CD4-positive, alpha-beta T cell (primary cell): ENCODE measurements at regions of chr21 and their contacts with region 1.

Region 1: DNA sequence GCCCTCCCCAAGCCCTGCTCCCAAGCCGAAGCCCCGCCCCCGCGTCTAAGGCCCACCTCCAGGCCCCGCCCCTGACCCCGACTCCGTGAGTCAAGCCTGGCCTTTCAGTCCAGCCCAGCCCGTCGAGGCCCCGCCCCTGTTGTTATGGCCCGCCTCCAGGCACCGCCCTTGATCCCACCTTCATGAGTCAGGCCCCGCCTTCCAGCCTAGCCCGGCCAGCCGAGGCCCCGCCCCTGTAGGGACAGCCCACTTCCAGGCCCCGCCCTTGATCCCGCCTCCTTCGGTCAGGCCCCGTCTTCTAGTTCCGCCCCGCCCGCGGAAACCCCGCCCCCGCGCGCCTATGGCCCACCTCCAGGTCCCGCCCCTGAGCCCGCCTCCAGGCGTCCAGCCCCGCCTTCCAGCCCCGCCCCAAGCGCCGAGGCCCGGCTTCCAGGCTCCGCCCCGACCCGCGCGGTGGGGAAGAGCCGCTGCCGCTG is 247 bp upstream of the DOP1B start:
- DNase-seq: peak; percentile 99 to 100 (median 100)
- ATAC-seq: peak; percentile 90
- H3K4me3 ChIP-seq: peak overlapping the region; percentile 85
- H3K4me3 Mint-ChIP-seq: peak overlapping the region; percentile 94
- H3K27ac ChIP-seq: peak overlapping the region; percentile 70 to 74
- H3K27ac Mint-ChIP-seq: peak overlapping the region; percentile 76
- H3K4me1 ChIP-seq: peaks cover 25% of the 10 kb centered on the region
- H3K4me1 Mint-ChIP-seq: peaks cover 44% of the 10 kb centered on the region
- H3K27me3 ChIP-seq: no peaks in the 10 kb centered on the region
- H3K27me3 Mint-ChIP-seq: no peaks in the 10 kb centered on the region
- CTCF ChIP-seq: no peak

Region 2: DNA sequence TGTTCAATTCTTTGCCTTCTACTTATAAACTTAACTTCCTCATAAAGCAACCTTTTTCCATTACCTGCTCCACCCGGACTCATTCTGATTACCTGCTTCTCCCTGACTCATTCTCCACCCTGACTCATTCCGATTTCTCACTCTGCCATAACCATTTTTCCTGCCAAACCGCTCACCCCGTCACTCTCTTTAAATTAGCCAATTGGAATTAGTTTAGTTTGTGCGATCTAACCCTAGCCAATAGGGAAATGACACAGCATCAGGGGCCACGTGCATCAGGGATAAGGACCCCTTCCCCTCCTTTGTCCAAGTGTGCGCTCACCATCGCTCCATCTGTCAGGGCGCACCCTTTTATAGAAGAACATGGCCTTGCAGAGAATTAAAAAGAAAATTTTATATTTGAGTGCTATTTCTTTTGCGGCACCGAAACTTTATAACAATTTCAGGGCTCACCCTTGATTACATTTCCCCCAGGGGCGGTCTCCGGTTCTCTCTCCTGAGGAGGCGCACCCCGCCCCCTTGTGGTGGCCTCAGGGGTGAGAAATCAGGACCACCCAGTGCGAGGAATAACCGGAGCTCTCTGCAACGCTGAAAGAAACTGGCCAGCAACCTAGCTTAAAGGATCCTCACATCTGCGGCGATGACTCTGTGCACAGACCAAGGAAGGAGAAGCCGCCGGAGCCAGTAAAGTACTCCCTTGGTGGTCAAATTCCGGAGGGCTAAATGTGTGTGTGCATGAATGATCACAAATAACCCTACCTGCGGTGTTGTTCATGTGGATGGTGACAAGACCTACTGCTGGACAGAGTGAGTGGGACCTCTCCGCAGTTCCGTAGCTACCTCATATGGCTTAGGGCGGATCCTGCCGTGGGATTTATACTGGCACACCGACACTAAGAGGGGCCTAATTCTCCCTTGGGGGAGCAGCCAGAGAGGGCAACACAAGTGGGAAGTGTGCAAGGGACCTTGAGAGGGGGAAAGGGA is 51.8 kb before region 1 on chr21:
- CTCF ChIA-PET with region 1: no interaction called
- POLR2A ChIA-PET with region 1: no interaction called
- intact Hi-C with region 1: no loop called
- DNase-seq: peak in 13 of 14 experiments; percentile 29 to 72 (median 51)
- ATAC-seq: peak; percentile 71
- H3K4me3 ChIP-seq: no peak overlapping the region
- H3K4me3 Mint-ChIP-seq: no peak overlapping the region
- H3K27ac ChIP-seq: no peak overlapping the region
- H3K27ac Mint-ChIP-seq: no peak overlapping the region
- H3K4me1 ChIP-seq: peaks cover 8% of the 10 kb centered on the region
- H3K4me1 Mint-ChIP-seq: peaks cover 11% of the 10 kb centered on the region
- H3K27me3 ChIP-seq: peaks cover 13 to 18% of the 10 kb centered on the region in 2 experiments
- H3K27me3 Mint-ChIP-seq: peaks cover 70% of the 10 kb centered on the region
- CTCF ChIP-seq: peak; percentile 61

Region 3: DNA sequence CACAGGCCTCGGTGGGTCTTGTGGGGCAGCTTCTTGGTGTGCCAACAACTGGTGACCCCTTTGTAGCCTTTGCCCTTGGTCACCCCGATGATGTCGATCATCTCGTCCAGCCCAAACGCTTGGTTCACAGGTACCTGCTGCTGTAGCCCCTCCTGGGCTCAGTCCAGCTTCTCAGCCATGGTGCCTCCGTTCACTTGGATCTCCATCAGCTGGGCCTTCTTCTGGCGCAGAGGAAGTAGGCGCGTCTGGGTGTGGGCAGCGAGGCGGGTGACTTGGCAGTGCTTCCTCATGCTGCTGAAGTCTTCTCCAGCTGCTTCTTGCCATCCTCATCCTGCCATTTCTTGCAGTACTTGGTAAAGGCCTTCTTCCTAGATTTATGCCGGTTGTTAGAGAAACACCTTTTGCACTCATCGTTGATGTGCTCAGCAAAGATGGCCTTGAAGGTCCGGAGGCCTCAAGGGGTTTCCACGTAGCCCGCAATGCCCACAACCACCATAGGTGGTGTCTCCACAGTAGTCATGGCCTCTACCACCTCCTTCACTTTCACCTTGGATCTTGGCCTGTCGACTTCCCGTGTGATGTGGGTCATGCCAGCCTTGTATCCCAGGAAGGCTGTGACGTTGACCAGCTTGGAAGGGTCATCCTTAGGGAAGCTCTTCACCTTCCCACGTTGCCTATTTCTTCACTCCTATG is 13.2 kb after region 1 on chr21:
- CTCF ChIA-PET with region 1: interaction called, 23 read pairs
- POLR2A ChIA-PET with region 1: interaction called, 11 read pairs
- intact Hi-C with region 1: loop called (anchors 1 to 2 kb)
- DNase-seq: no peak
- ATAC-seq: no peak
- H3K4me3 ChIP-seq: no peak overlapping the region
- H3K4me3 Mint-ChIP-seq: no peak overlapping the region
- H3K27ac ChIP-seq: no peak overlapping the region
- H3K27ac Mint-ChIP-seq: no peak overlapping the region
- H3K4me1 ChIP-seq: peaks cover 17% of the 10 kb centered on the region
- H3K4me1 Mint-ChIP-seq: peaks cover 16% of the 10 kb centered on the region
- H3K27me3 ChIP-seq: no peaks in the 10 kb centered on the region
- H3K27me3 Mint-ChIP-seq: no peaks in the 10 kb centered on the region
- CTCF ChIP-seq: no peak

Region 4: DNA sequence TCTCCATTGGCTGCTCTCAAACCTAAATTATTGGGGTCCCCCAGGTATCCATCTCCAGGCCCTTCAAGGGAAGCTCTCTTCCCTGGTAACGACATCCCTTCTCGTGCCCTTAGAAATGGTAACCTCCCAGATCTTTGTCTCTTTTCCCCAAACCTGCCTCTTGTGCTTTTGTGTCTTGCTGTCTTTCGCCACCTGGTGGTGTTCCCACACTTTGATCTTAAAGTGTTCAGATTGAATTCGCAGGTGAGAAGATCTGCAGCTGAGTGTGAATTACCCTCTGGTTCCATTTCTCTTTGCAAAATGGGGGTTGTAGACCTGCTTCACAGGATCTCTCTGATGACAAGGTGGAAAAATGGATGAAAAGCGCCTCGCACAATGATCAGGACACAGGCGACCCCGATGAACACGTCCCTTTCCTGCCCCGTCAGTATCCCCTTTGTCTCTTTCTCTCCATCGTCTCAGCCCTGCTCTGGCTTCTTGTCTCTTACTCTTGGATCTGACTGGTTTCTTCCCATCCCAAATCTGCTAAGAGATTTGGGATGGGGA is 53.3 kb after region 1 on chr21:
- CTCF ChIA-PET with region 1: interaction called, 10 read pairs
- POLR2A ChIA-PET with region 1: interaction called, 3 read pairs
- intact Hi-C with region 1: loop called (anchors 2 kb)
- DNase-seq: peak; percentile 5 to 77 (median 37)
- ATAC-seq: peak; percentile 49
- H3K4me3 ChIP-seq: no peak overlapping the region
- H3K4me3 Mint-ChIP-seq: no peak overlapping the region
- H3K27ac ChIP-seq: no peak overlapping the region
- H3K27ac Mint-ChIP-seq: no peak overlapping the region
- H3K4me1 ChIP-seq: peaks cover 3% of the 10 kb centered on the region
- H3K4me1 Mint-ChIP-seq: peaks cover 9% of the 10 kb centered on the region
- H3K27me3 ChIP-seq: no peaks in the 10 kb centered on the region
- H3K27me3 Mint-ChIP-seq: no peaks in the 10 kb centered on the region
- CTCF ChIP-seq: peak; percentile 44

Region 5: DNA sequence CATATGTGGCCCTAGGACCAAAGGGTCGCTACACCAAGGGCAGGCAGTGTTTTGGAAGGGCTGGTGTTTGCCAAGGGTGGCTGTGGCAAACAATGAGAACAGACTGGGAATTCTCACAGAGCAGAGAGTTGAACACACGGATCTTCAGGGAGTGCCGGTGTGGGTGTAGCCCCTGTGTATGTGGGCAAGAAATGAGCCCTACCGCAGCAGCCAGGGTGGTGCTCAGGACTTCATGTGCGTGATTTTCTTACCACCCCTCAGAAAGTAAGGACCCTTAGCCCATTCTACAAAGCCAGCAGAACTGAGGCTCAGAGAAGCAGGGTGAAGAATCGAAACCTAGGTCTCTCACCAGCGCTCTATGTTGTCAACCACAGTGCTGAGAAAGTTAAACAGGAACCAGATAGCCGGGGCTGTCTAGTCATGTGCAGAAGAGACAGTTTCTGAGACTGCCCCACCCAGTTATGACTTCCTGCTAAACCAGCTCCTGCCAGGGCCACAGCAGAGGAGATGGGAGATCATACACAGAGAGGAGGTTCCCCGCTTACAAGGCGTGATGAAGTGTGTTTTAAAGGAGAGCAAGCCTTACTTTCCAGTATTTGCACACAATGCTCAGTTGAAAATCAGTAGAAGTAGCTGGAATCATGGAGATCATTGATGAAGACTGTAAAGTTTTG is 141.7 kb after region 1 on chr21:
- CTCF ChIA-PET with region 1: no interaction called
- POLR2A ChIA-PET with region 1: interaction called, 7 read pairs
- intact Hi-C with region 1: loop called in 1 of 2 experiments (anchors 1 kb)
- DNase-seq: peak; percentile 60 to 92 (median 76)
- ATAC-seq: peak; percentile 94
- H3K4me3 ChIP-seq: peak overlapping the region; percentile 54
- H3K4me3 Mint-ChIP-seq: peak overlapping the region; percentile 67
- H3K27ac ChIP-seq: peak overlapping the region; percentile 87 to 96
- H3K27ac Mint-ChIP-seq: peak overlapping the region; percentile 96
- H3K4me1 ChIP-seq: peaks cover 40% of the 10 kb centered on the region
- H3K4me1 Mint-ChIP-seq: peaks cover 39% of the 10 kb centered on the region
- H3K27me3 ChIP-seq: no peaks in the 10 kb centered on the region
- H3K27me3 Mint-ChIP-seq: no peaks in the 10 kb centered on the region
- CTCF ChIP-seq: no peak

Region 6: GRCh38 chr21:36330904-36331303 is 174.5 kb after region 1 on chr21:
- CTCF ChIA-PET with region 1: interaction called, 7 read pairs
- POLR2A ChIA-PET with region 1: interaction called, 3 read pairs
- intact Hi-C with region 1: loop called in 1 of 2 experiments (anchors 1 kb)
- DNase-seq: peak in 13 of 14 experiments; percentile 16 to 77 (median 41)
- ATAC-seq: peak; percentile 91
- H3K4me3 ChIP-seq: no peak overlapping the region
- H3K4me3 Mint-ChIP-seq: peak overlapping the region; percentile 8
- H3K27ac ChIP-seq: no peak overlapping the region
- H3K27ac Mint-ChIP-seq: peak overlapping the region; percentile 87
- H3K4me1 ChIP-seq: peaks cover 32% of the 10 kb centered on the region
- H3K4me1 Mint-ChIP-seq: peaks cover 44% of the 10 kb centered on the region
- H3K27me3 ChIP-seq: no peaks in the 10 kb centered on the region
- H3K27me3 Mint-ChIP-seq: no peaks in the 10 kb centered on the region
- CTCF ChIP-seq: peak; percentile 80